B cell (primary cell): ENCODE measurements at regions of chr3 and their contacts with region 1.

Region 1: GRCh38 chr3:152508705-152509104 is 240.0 kb downstream of the MBNL1 start:
- DNase-seq: peak; percentile 54
- ATAC-seq: no peak
- H3K4me3 ChIP-seq: no peak overlapping the region
- H3K4me3 Mint-ChIP-seq: peak overlapping the region; percentile 4
- H3K27ac ChIP-seq: peak overlapping the region in 1 of 2 donors; percentile 59
- H3K27ac Mint-ChIP-seq: peak overlapping the region; percentile 54
- H3K4me1 ChIP-seq: peaks cover 40 to 53% of the 10 kb centered on the region in 2 donors
- H3K4me1 Mint-ChIP-seq: peaks cover 71% of the 10 kb centered on the region
- H3K27me3 ChIP-seq: no peaks in the 10 kb centered on the region
- H3K27me3 Mint-ChIP-seq: no peaks in the 10 kb centered on the region
- CTCF ChIP-seq: peak; percentile 70

Region 2: GRCh38 chr3:152491922-152492321 is 16.8 kb before region 1 on chr3:
- CTCF ChIA-PET with region 1: interaction called, 21 read pairs
- POLR2A ChIA-PET with region 1: no interaction called
- intact Hi-C with region 1: loop called (anchors 2 kb)
- DNase-seq: peak; percentile 43
- ATAC-seq: peak; percentile 67
- H3K4me3 ChIP-seq: no peak overlapping the region
- H3K4me3 Mint-ChIP-seq: peak overlapping the region; percentile 30
- H3K27ac ChIP-seq: peak overlapping the region in 1 of 2 donors; percentile 56
- H3K27ac Mint-ChIP-seq: peak overlapping the region; percentile 46
- H3K4me1 ChIP-seq: peaks cover 12 to 13% of the 10 kb centered on the region in 2 donors
- H3K4me1 Mint-ChIP-seq: peaks cover 41% of the 10 kb centered on the region
- H3K27me3 ChIP-seq: no peaks in the 10 kb centered on the region
- H3K27me3 Mint-ChIP-seq: no peaks in the 10 kb centered on the region
- CTCF ChIP-seq: no peak

Region 3: GRCh38 chr3:152519376-152519775 is 10.7 kb after region 1 on chr3:
- CTCF ChIA-PET with region 1: interaction called, 201 read pairs
- POLR2A ChIA-PET with region 1: no interaction called
- intact Hi-C with region 1: loop called (anchors 1 kb)
- DNase-seq: no peak
- ATAC-seq: no peak
- H3K4me3 ChIP-seq: no peak overlapping the region
- H3K4me3 Mint-ChIP-seq: no peak overlapping the region
- H3K27ac ChIP-seq: no peak overlapping the region
- H3K27ac Mint-ChIP-seq: peak overlapping the region; percentile 33
- H3K4me1 ChIP-seq: peaks cover 43 to 45% of the 10 kb centered on the region in 2 donors
- H3K4me1 Mint-ChIP-seq: peaks cover 62% of the 10 kb centered on the region
- H3K27me3 ChIP-seq: no peaks in the 10 kb centered on the region
- H3K27me3 Mint-ChIP-seq: no peaks in the 10 kb centered on the region
- CTCF ChIP-seq: no peak

Region 4: GRCh38 chr3:152574461-152575079 is 65.9 kb after region 1 on chr3:
- CTCF ChIA-PET with region 1: interaction called, 20 read pairs
- POLR2A ChIA-PET with region 1: no interaction called
- intact Hi-C with region 1: loop called (anchors 5 kb)
- DNase-seq: peak; percentile 65
- ATAC-seq: peak; percentile 61
- H3K4me3 ChIP-seq: no peak overlapping the region
- H3K4me3 Mint-ChIP-seq: no peak overlapping the region
- H3K27ac ChIP-seq: no peak overlapping the region
- H3K27ac Mint-ChIP-seq: no peak overlapping the region
- H3K4me1 ChIP-seq: no peaks in the 10 kb centered on the region
- H3K4me1 Mint-ChIP-seq: peaks cover 2% of the 10 kb centered on the region
- H3K27me3 ChIP-seq: no peaks in the 10 kb centered on the region
- H3K27me3 Mint-ChIP-seq: no peaks in the 10 kb centered on the region
- CTCF ChIP-seq: peak; percentile 74